ENCODE measurements at regions of chr16 and their contacts with region 1.

Region 1: DNA sequence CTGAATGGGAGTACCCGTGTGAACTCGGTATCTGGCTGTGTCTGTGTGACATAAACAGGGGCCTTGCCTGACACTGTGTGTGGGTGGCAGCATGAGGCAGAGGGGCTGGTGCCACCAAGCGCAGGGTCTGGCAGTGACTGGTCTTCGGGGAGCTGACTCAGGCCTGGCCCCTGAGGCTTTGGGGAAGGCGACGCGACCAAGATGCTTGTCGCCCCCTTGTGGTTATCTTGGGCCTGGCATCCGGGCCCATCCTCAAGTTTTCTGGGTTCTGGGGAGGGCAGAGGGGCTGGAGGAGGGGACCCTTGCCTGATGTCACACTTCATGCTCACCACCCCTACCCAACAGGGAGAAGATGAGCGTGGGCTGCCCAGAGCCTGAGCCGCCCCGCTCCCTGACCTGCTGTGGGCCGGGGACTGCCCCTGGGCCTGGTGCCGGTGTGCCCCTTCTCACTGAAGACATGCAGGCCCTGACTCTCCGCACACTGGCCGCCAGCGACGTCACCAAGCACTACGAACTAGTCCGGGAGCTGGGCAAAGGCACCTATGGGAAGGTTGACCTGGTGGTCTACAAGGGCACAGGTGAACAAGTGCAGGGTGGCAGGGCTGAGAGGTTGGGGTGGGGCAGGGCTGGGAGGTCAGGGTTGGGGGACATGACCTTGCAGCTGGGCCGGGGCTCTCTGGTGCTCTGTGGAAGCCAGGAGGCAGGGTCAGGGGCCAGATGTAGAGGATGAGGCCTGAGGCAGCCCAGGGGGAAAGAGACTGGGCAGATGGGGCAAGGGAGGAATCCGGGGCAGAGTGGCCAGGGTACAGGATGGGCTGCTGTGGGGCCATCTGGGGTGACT is 24.9 kb downstream of the SBK1 start:
- DNase-seq: no peak
- H3K4me3 ChIP-seq: no peak overlapping the region
- CTCF ChIP-seq: peak; percentile 83

Region 2: DNA sequence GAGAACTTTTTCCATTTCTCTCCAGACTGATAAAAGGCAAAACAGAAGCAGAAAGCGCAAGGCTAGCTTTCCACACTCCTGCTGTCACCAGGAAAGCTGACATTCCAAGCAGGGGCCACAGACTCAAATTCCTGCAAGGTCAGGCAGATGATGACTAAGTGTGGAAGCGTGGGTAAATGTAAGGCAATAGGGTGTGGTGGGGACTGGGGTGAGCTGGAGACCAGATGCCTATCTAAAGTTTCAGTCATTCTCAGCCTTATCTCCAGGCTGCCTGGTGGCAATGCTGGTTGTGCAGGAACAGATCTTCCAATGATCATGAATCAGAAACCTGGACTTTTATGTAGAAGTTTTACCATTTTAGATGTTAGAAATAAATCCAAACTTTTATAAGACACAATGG is 477.8 kb before region 1 on chr16:
- CTCF ChIA-PET with region 1: no interaction called
- POLR2A ChIA-PET with region 1: no interaction called
- DNase-seq: no peak
- H3K4me3 ChIP-seq: no peak overlapping the region
- CTCF ChIP-seq: no peak

Region 3: GRCh38 chr16:28205117-28205899 is 112.0 kb before region 1 on chr16:
- CTCF ChIA-PET with region 1: no interaction called
- POLR2A ChIA-PET with region 1: no interaction called
- DNase-seq: no peak
- H3K4me3 ChIP-seq: no peak overlapping the region
- CTCF ChIP-seq: no peak

Region 4: GRCh38 chr16:28297784-28298510 is 19.3 kb before region 1 on chr16:
- CTCF ChIA-PET with region 1: interaction called, 13 read pairs
- POLR2A ChIA-PET with region 1: no interaction called
- DNase-seq: no peak
- H3K4me3 ChIP-seq: no peak overlapping the region
- CTCF ChIP-seq: no peak

Region 5: GRCh38 chr16:28304214-28304613 is 13.0 kb before region 1 on chr16:
- CTCF ChIA-PET with region 1: interaction called, 14 read pairs
- POLR2A ChIA-PET with region 1: no interaction called
- DNase-seq: no peak
- H3K4me3 ChIP-seq: no peak overlapping the region
- CTCF ChIP-seq: no peak

Measured in AG04449 (cell line).